Caco-2 (cell line): ENCODE measurements at regions of chr17 and their contacts with region 1.

Region 1: DNA sequence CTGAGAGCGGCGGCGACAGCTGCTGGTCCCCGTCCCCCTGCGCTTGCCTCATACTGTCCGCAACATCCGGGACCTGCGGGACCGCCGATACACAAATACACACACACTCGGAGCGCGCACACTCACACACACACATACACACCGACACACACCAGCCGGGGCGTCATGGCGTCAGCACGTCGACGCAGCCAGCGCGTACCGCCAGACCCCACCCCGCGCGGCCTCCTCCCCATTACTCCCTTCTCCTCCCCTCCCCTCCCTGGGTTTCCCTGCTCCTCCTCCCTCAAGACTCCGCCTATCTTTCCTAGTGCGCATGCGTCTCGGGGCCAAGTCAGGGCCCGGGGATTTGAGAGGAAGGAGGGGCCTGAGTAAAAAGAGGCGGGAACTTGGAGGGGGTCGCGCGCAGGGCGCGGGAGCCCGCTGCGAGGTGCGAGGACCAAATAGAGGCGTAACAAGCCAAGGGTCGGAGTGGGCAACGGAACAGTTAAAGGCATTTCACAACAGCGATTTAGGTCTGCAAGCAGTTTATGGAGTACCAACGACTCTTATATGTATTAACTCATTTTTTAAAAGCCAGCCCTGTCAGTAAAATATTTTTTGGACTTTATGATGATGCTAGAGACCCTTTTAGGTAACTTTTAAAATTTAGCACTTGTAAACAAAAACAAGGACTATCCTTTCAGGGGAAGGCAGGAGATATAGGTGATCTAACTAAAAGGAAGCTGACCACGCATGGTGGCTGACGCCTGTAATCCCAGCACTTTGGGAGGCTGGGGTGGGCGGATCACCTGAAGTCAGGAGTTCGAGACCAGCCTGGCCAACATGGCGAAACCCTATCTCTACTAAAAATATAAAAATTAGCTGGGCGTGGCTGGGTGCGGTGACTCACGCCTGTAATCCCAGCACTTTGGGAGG is at the start of gene SPOP:
- DNase-seq: peak; percentile 100
- H3K4me3 ChIP-seq: peak within 1 kb of the TSS; percentile 68
- H3K4me3 Mint-ChIP-seq: peak within 1 kb of the TSS; percentile 83
- H3K27ac Mint-ChIP-seq: peak within 1 kb of the TSS; percentile 92
- H3K4me1 ChIP-seq: peaks cover 5% of the 10 kb centered on the region; the same call in 1 of the 2 replicates
- H3K4me1 Mint-ChIP-seq: peaks cover 24% of the 10 kb centered on the region
- H3K27me3 ChIP-seq: no peaks in the 10 kb centered on the region
- H3K27me3 Mint-ChIP-seq: no peaks in the 10 kb centered on the region
- CTCF ChIP-seq: no peak
- total RNA-seq, gene SPOP: 70.2 and 78.4 TPM in 2 replicates

Region 2: GRCh38 chr17:49414622-49415350 is 263.4 kb before region 1 on chr17 and contains the start of gene PHB1:
- CTCF ChIA-PET with region 1: interaction called, 3 read pairs
- POLR2A ChIA-PET with region 1: interaction called, 8 read pairs
- intact Hi-C with region 1: loop called (anchors 1 kb)
- DNase-seq: peak; percentile 100
- H3K4me3 ChIP-seq: peak within 1 kb of the TSS; percentile 61
- H3K4me3 Mint-ChIP-seq: peak within 1 kb of the TSS; percentile 88
- H3K27ac Mint-ChIP-seq: peak within 1 kb of the TSS; percentile 84
- H3K4me1 ChIP-seq: peaks cover 4% of the 10 kb centered on the region
- H3K4me1 Mint-ChIP-seq: no peaks in the 10 kb centered on the region
- H3K27me3 ChIP-seq: no peaks in the 10 kb centered on the region
- H3K27me3 Mint-ChIP-seq: no peaks in the 10 kb centered on the region
- CTCF ChIP-seq: no peak
- total RNA-seq, gene PHB1: 761 and 848 TPM in 2 replicates

Region 3: DNA sequence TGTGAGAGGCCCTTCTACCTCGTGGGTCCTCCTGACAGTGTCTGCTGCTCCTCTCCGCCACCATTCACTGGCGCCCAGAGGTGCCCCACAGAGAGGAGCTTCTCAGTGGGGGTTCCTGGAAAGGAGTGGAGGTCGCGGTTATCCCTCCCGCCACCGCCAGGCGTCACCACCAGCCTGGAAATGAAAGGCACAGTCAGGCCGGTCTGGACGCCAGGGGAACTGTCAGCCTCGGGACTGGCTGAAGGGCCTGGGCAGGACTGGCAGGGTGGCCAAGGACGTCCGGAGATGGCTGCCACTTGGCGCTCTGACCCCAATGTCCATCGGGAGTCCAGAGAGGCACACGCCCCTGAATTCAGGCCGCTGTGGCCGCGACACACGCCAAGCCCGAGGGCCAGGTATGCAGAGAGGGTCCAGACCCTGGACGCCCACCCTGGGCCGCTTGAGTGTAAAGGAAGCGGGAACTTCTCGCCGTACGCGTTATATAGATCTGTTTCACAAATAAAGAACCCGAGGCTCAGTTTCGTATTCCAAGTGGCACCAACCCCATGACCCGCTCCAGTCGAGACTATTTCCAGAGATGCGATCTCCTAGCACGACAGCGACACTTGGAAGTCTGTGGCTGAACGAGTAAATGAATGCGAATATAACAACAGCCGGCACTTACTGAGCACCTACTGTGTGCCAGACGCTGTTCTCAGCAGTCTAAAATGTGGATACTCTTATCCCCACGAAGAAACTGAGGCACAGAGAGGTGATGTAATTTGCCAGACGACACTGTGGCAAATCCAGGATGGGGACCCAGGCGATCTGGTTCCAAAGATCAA is 110.1 kb before region 1 on chr17:
- CTCF ChIA-PET with region 1: interaction called, 44 read pairs
- POLR2A ChIA-PET with region 1: no interaction called
- intact Hi-C with region 1: loop called (anchors 1 kb)
- DNase-seq: peak; percentile 97 to 99
- H3K4me3 ChIP-seq: peak overlapping the region; percentile 41
- H3K4me3 Mint-ChIP-seq: peak overlapping the region; percentile 73
- H3K27ac Mint-ChIP-seq: no peak overlapping the region
- H3K4me1 ChIP-seq: peaks cover 4% of the 10 kb centered on the region
- H3K4me1 Mint-ChIP-seq: peaks cover 7% of the 10 kb centered on the region
- H3K27me3 ChIP-seq: no peaks in the 10 kb centered on the region; the same call in 1 of the 2 replicates
- H3K27me3 Mint-ChIP-seq: peaks cover 19% of the 10 kb centered on the region
- CTCF ChIP-seq: peak; percentile 99 to 100

Region 4: GRCh38 chr17:49582789-49583188 is 95.4 kb before region 1 on chr17:
- CTCF ChIA-PET with region 1: interaction called, 9 read pairs
- POLR2A ChIA-PET with region 1: interaction called, 10 read pairs
- intact Hi-C with region 1: no loop called
- DNase-seq: peak in 1 of 2 experiments; percentile 39
- H3K4me3 ChIP-seq: no peak overlapping the region
- H3K4me3 Mint-ChIP-seq: no peak overlapping the region
- H3K27ac Mint-ChIP-seq: no peak overlapping the region
- H3K4me1 ChIP-seq: no peaks in the 10 kb centered on the region
- H3K4me1 Mint-ChIP-seq: no peaks in the 10 kb centered on the region
- H3K27me3 ChIP-seq: no peaks in the 10 kb centered on the region
- H3K27me3 Mint-ChIP-seq: peaks cover 4% of the 10 kb centered on the region
- CTCF ChIP-seq: no peak

Region 5: DNA sequence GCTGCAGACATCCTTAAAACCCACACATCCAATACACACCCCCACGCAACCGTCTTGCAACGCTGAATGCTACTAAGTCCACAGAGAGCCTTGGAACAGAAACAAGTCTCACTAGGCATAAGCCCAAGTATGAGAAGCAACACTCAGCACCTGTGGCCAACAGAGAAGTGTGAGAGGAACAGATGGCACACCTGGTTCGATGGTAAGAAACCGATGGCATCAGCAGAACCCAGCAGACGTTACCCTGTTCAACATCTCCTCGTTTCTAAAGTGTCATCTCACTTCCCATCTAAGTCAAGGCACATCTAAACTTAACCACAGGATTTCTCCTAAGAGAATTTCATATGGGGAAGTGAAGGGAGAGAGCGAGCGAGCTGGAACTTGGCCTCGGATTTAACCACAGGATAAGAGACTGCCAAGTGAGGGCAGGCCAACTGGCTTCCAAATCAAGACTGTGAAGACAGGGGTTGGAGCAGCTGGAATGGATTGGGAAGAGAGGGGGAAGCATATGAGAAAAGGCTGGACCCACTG is 61.5 kb before region 1 on chr17:
- CTCF ChIA-PET with region 1: interaction called, 12 read pairs
- POLR2A ChIA-PET with region 1: interaction called, 14 read pairs
- intact Hi-C with region 1: loop called (anchors 1 kb)
- DNase-seq: no peak
- H3K4me3 ChIP-seq: no peak overlapping the region
- H3K4me3 Mint-ChIP-seq: no peak overlapping the region
- H3K27ac Mint-ChIP-seq: no peak overlapping the region
- H3K4me1 ChIP-seq: peaks cover 20% of the 10 kb centered on the region
- H3K4me1 Mint-ChIP-seq: peaks cover 12% of the 10 kb centered on the region
- H3K27me3 ChIP-seq: no peaks in the 10 kb centered on the region
- H3K27me3 Mint-ChIP-seq: no peaks in the 10 kb centered on the region
- CTCF ChIP-seq: no peak

Region 6: DNA sequence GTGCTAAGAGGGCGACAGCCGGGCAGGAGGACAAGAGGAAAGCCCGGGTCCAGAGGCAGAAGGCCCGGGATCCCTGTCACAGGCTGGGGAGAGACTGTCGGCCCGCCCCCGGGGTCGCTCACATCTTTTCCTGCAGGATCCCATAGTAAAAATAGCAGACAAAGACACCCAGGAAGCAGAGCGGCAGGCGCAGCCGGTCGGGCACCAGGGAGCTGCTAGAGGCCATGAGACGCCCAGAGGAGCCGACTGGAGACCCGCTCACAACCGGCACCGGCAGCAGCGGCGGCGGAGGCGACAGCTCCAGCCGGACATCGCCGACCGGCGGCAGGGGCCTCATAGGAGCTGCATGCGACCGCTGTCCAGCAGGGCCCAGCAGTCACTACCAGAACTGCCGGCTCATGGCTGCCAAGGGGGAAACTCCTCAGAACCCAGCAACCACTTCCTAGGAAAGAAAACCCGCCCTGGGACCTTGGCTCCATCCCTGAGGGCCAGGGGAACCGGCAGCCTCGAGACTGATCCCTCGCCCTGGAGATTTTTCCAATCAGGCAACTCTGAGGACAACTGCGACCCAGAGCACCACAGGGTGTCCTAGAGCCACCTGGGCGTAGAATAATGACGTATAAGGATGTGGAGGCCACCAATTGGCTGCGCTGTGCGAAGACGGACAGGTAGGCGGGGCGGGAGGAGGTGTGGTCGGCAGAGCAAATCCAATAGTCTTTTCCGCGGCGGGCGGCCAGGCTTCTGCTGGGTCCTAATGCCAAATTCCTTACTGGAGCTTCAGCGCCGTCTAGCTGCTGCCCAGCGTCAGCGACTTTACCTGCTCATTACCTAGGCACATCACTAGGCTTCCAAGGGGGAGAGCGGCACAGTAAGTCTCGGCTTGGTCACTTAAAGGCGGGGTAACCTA is 29.7 kb after region 1 on chr17 and contains the start of gene SLC35B1:
- CTCF ChIA-PET with region 1: interaction called, 15 read pairs
- POLR2A ChIA-PET with region 1: interaction called, 6 read pairs
- intact Hi-C with region 1: loop called (anchors 1 kb)
- DNase-seq: peak; percentile 100
- H3K4me3 ChIP-seq: peak within 1 kb of the TSS; percentile 69
- H3K4me3 Mint-ChIP-seq: peak within 1 kb of the TSS; percentile 89
- H3K27ac Mint-ChIP-seq: peak within 1 kb of the TSS; percentile 99
- H3K4me1 ChIP-seq: peaks cover 8% of the 10 kb centered on the region
- H3K4me1 Mint-ChIP-seq: peaks cover 28% of the 10 kb centered on the region
- H3K27me3 ChIP-seq: no peaks in the 10 kb centered on the region
- H3K27me3 Mint-ChIP-seq: no peaks in the 10 kb centered on the region
- CTCF ChIP-seq: peak; percentile 82 to 100
- total RNA-seq, gene SLC35B1: 228 and 232 TPM in 2 replicates

Region 7: GRCh38 chr17:49822829-49823228 is 144.6 kb after region 1 on chr17:
- CTCF ChIA-PET with region 1: no interaction called
- POLR2A ChIA-PET with region 1: no interaction called
- intact Hi-C with region 1: no loop called
- DNase-seq: no peak
- H3K4me3 ChIP-seq: no peak overlapping the region
- H3K4me3 Mint-ChIP-seq: no peak overlapping the region
- H3K27ac Mint-ChIP-seq: no peak overlapping the region
- H3K4me1 ChIP-seq: 0 out of 2 replicates have a peak, but pooled peaks cover 5% of the 10 kb centered on the region
- H3K4me1 Mint-ChIP-seq: peaks cover 10% of the 10 kb centered on the region
- H3K27me3 ChIP-seq: no peaks in the 10 kb centered on the region
- H3K27me3 Mint-ChIP-seq: no peaks in the 10 kb centered on the region
- CTCF ChIP-seq: no peak

Region 8: DNA sequence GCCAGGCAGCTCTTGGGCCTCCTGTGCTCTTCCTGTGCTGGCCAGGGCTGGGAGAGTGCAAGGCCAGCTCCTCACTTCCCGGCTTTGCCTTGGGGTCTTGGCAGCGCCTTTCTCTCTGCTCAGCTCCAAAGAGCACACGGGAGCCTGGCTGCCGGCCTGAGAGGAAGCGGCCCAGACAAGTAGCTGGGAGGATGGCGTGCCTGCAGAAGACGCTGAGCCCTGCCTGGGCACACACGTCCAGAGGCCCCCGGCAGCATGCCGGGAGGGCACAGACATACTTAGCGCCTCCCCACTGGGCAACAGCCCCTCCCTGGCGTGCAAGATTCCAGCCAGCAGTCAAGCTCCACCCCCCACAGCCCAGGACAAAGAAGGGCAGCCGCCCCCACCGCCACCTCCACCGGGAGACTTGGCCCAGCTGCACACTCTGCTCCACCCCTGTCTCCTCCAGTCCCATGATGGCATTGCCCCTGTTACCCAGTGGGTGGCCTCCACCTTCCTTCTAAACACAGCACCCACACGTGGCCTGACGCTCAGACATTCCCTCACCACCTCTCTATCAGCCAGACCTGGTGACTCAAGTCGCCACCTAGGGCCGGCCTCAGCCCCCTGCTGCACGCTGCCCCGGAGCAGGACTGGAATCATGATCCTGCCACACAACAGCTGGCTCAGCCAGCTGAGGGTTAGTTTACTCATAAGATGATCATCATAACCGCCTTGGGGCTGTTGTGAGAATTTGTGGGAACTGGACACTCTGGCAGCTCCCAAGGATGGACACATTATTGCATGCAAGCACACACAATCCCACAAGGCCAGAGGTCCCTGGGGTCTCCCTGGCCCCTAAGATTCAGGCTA is 500.0 kb after region 1 on chr17:
- CTCF ChIA-PET with region 1: no interaction called
- POLR2A ChIA-PET with region 1: interaction called, 16 read pairs
- intact Hi-C with region 1: no loop called
- DNase-seq: peak; percentile 85
- H3K4me3 ChIP-seq: no peak overlapping the region
- H3K4me3 Mint-ChIP-seq: peak overlapping the region; percentile 36
- H3K27ac Mint-ChIP-seq: peak overlapping the region; percentile 10
- H3K4me1 ChIP-seq: peaks cover 31% of the 10 kb centered on the region
- H3K4me1 Mint-ChIP-seq: peaks cover 20% of the 10 kb centered on the region
- H3K27me3 ChIP-seq: no peaks in the 10 kb centered on the region
- H3K27me3 Mint-ChIP-seq: no peaks in the 10 kb centered on the region
- CTCF ChIP-seq: peak; percentile 90 to 91